WTC11 (cell line): ENCODE measurements at regions of chr3 and their contacts with region 1.

Region 1: GRCh38 chr3:48039487-48040190 is 23.4 kb upstream of the MAP4 start:
- DNase-seq: no peak
- ATAC-seq: peak; percentile 59
- H3K4me3 Mint-ChIP-seq: no peak overlapping the region
- H3K27ac Mint-ChIP-seq: peak overlapping the region; percentile 91
- H3K4me1 Mint-ChIP-seq: peaks cover 23% of the 10 kb centered on the region
- H3K27me3 Mint-ChIP-seq: no peaks in the 10 kb centered on the region
- CTCF ChIP-seq: no peak

Region 2: DNA sequence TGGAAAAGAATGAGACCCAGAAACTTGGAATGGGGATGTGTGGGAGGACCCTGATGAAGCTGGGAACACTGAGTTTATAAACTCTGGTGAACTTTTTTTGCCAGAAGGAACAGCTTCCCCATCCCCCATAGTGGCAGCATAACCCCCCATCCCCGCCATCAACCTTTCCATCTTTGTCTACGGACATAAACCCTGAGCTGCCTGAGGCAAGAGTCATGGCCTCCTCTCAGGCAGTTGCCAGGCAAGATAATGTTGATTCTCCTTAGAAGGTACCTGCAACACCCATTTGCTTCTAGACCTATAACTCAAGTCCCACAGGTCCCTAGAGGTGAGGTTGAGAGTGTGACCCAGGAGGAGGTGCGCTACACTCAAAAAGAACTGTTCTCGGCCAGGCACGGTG is 34.9 kb before region 1 on chr3:
- CTCF ChIA-PET with region 1: no interaction called
- POLR2A ChIA-PET with region 1: no interaction called
- DNase-seq: no peak
- ATAC-seq: no peak
- H3K4me3 Mint-ChIP-seq: no peak overlapping the region
- H3K27ac Mint-ChIP-seq: 0 out of 2 replicates have a peak overlapping the region, but pooled peaks have one; percentile 23
- H3K4me1 Mint-ChIP-seq: peaks cover 11% of the 10 kb centered on the region
- H3K27me3 Mint-ChIP-seq: no peaks in the 10 kb centered on the region
- CTCF ChIP-seq: no peak

Region 3: GRCh38 chr3:48058091-48058490 is 18.5 kb after region 1 on chr3:
- CTCF ChIA-PET with region 1: no interaction called
- POLR2A ChIA-PET with region 1: no interaction called
- DNase-seq: no peak
- ATAC-seq: no peak
- H3K4me3 Mint-ChIP-seq: no peak overlapping the region
- H3K27ac Mint-ChIP-seq: no peak overlapping the region
- H3K4me1 Mint-ChIP-seq: no peaks in the 10 kb centered on the region
- H3K27me3 Mint-ChIP-seq: no peaks in the 10 kb centered on the region; the same call in 1 of the 2 replicates
- CTCF ChIP-seq: no peak

Region 4: GRCh38 chr3:48125026-48125705 is 85.5 kb after region 1 on chr3:
- CTCF ChIA-PET with region 1: no interaction called
- POLR2A ChIA-PET with region 1: interaction called, 12 read pairs
- DNase-seq: no peak
- ATAC-seq: peak; percentile 56
- H3K4me3 Mint-ChIP-seq: no peak overlapping the region
- H3K27ac Mint-ChIP-seq: no peak overlapping the region
- H3K4me1 Mint-ChIP-seq: peaks cover 12% of the 10 kb centered on the region
- H3K27me3 Mint-ChIP-seq: no peaks in the 10 kb centered on the region
- CTCF ChIP-seq: no peak